ENCODE measurements at regions of chr6 and their contacts with region 1.

Region 1: DNA sequence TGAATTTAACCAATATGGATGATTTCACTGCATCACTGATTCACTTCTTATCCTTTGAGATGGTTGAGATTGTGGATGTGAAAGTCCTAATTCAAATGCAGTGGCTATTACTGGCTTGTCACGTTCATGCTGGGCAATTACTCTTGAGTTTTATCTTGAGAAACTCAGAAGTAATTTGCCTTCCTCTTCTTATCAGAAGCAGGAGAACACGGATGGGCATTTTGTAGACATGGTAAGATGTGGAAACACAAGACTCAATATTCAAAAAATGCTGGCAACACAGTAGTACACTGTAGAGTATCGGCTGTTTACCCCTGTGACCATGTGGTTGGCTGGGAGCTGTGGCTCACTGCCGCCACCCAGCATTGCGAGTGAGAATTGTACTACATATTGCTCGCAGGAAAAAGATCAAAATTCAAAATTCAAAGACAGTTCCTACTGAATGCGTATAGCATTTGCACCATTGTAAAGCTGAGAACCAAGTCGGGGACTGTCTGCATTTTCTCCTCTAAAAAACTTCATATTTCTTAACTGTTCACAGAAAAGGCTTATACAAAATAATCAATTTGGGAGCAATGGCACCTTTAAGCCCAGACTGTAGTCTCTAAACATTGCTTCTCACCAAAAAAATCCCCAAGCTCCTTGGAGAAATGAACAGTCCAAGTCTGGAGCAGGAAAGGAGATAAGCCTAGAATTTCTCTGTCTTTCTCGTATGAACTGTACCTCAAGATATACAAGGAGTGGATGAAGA is 61.9 kb upstream of the ELOVL5 start:
- DNase-seq: peak; percentile 58
- CTCF ChIP-seq: peak; percentile 86

Region 2: GRCh38 chr6:53284901-53285300 is 125.8 kb before region 1 on chr6:
- CTCF ChIA-PET with region 1: no interaction called
- POLR2A ChIA-PET with region 1: no interaction called
- DNase-seq: no peak
- CTCF ChIP-seq: no peak

Region 3: GRCh38 chr6:53394704-53395103 is 16.0 kb before region 1 on chr6:
- CTCF ChIA-PET with region 1: interaction called, 22 read pairs
- POLR2A ChIA-PET with region 1: no interaction called
- DNase-seq: no peak
- CTCF ChIP-seq: no peak

Region 4: GRCh38 chr6:53426667-53427270 is 16.1 kb after region 1 on chr6:
- CTCF ChIA-PET with region 1: interaction called, 16 read pairs
- POLR2A ChIA-PET with region 1: no interaction called
- DNase-seq: peak; percentile 40
- CTCF ChIP-seq: no peak

Region 5: DNA sequence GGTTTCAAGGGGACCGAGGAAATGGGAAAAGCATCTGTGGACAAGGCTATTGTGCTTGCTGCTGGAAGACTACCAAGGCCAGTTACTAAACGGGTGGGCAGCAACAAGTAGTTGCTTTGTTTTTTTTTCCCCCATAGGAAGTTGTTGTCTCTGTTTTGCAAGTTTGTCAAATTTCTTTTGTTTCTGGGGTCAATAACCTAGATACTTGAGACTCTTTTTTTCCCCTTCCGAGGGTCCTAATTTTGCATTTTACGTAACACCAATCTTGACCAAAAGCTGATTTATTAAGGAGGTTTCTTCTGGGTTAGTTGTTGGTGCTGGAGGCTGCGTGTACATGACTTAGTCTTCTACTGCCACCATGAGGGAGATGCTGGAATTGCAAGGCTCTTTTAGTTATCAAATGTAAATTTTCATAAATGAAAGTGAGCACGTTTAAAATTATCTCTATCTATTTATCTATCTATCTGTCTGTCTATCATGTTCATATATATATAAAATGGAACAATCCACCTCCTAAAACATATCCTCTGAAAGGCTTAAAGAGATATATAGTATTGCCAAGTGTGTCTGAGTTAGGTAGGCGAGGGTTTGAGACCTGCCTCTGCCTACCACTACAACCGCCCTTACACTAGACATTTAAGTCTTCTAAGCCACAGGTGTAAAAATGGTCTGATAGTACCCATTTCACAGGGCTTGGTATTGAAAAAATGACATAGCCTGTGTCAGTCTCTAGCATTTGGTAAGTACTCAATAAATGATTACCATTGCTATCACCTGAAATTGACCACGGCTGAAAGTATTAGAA is 74.0 kb after region 1 on chr6:
- CTCF ChIA-PET with region 1: interaction called, 16 read pairs
- POLR2A ChIA-PET with region 1: no interaction called
- DNase-seq: peak; percentile 22
- CTCF ChIP-seq: peak; percentile 87

Measured in GM10248 (cell line).